ENCODE measurements at regions of chr7 and their contacts with region 1.

Region 1: GRCh38 chr7:18393465-18394118 is 102.0 kb upstream of the HDAC9 start:
- DNase-seq: no peak
- ATAC-seq: no peak
- H3K4me3 ChIP-seq: no peak overlapping the region
- H3K27ac ChIP-seq: no peak overlapping the region
- H3K4me1 ChIP-seq: peaks cover 17% of the 10 kb centered on the region
- H3K27me3 ChIP-seq: no peaks in the 10 kb centered on the region
- CTCF ChIP-seq: no peak

Region 2: GRCh38 chr7:18408461-18408860 is 14.9 kb after region 1 on chr7:
- CTCF ChIA-PET with region 1: no interaction called
- POLR2A ChIA-PET with region 1: no interaction called
- intact Hi-C with region 1: loop called (anchors 2 kb)
- DNase-seq: peak; percentile 86
- ATAC-seq: peak; percentile 98
- H3K4me3 ChIP-seq: no peak overlapping the region
- H3K27ac ChIP-seq: peak overlapping the region; percentile 49
- H3K4me1 ChIP-seq: peaks cover 27% of the 10 kb centered on the region
- H3K27me3 ChIP-seq: no peaks in the 10 kb centered on the region
- CTCF ChIP-seq: no peak